HCT116 (cell line): ENCODE measurements at regions of chr6 and their contacts with region 1.

Region 1: DNA sequence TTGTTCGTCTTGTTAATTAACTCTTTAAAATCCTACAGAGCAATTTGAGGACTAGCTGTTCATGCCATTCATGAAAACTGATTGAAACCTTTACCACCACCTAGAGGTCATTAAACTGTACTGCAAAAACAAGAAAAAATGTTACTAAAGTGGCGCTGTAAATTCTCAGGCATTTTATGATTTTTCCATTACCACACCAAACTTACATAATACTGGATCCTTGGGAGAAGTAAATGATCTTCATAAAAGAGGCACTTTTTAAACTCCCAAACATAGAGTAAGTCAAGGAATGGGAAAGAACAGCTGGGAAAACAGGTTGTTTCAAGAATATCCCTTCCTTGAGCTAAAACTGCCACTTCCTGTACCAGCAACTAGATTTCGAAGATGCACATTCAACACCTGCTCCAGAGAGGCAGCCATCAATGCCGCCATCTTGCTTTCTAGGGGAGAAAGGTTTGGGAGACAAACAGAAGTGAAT is 54.3 kb downstream of the MYLIP start:
- DNase-seq: peak; percentile 52
- ATAC-seq: peak; percentile 63
- H3K4me3 ChIP-seq: no peak overlapping the region
- H3K27ac ChIP-seq: no peak overlapping the region
- H3K4me1 ChIP-seq: peaks cover 0 to 5% of the 10 kb centered on the region in 2 experiments; a peak in 1 of 4 replicates
- H3K27me3 ChIP-seq: no peaks in the 10 kb centered on the region
- CTCF ChIP-seq: peak; percentile 55 to 87 (median 70); a peak in 5 of 6 replicates
- POLR2A ChIP-seq: no peak
- RAD21 ChIP-seq: peak; percentile 77

Region 2: DNA sequence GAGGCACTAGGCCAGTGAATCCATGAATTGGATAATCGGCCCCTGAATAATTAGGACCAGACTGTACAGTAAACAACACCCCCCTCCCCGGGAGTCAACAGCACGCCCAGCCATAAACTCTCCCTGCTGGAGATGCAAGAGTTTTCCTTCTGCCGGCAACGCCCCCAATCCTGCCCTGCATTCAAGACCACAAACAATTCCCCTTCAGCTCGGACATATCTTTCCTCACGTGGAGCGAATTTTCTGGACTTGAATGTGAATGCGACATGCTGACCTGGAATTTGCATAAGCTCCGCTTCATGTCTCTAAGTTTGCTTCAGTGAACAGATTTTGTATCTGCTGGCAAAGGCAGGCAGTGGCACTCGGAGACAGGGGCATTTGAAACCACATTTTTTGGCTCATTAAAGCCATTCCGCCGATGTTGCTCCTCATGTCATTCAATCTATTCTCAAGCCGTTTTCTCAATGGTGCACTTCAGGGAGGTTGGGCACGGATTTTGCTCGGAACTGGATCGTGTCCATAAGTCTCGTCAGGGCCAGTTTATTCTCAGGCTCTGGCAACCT is 17.2 kb after region 1 on chr6:
- CTCF ChIA-PET with region 1: interaction called, 12 read pairs
- POLR2A ChIA-PET with region 1: interaction called, 4 read pairs
- RAD21 ChIA-PET with region 1: no interaction called
- intact Hi-C with region 1: no loop called
- DNase-seq: no peak
- ATAC-seq: no peak
- H3K4me3 ChIP-seq: no peak overlapping the region
- H3K27ac ChIP-seq: no peak overlapping the region
- H3K4me1 ChIP-seq: no peaks in the 10 kb centered on the region
- H3K27me3 ChIP-seq: no peaks in the 10 kb centered on the region
- CTCF ChIP-seq: no peak
- POLR2A ChIP-seq: no peak
- RAD21 ChIP-seq: no peak

Region 3: DNA sequence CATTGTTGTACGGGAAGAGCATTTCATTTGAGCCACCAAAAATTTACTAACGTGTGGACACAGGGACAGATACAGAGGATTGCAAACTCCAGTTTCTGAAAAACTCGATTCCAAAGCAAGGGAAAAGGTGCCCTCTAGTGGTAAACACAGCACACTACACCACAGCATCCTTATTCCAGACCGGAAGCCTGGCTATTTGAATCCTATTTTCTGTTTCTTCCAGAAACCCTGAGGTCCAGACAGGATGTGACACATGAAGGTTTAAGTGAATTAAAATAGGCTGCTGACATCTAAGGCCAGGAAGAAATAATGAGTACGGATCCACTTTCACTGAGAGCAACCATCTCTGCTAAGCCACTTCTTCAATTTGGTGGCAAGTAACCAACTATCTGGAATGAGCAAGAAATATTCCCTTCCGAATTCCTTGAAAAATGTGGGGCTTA is 23.4 kb after region 1 on chr6:
- CTCF ChIA-PET with region 1: interaction called, 12 read pairs
- POLR2A ChIA-PET with region 1: no interaction called
- RAD21 ChIA-PET with region 1: no interaction called
- intact Hi-C with region 1: no loop called
- DNase-seq: peak; percentile 37
- ATAC-seq: peak; percentile 91
- H3K4me3 ChIP-seq: no peak overlapping the region
- H3K27ac ChIP-seq: no peak overlapping the region
- H3K4me1 ChIP-seq: peaks cover 0 to 3% of the 10 kb centered on the region in 2 experiments; a peak in 1 of 4 replicates
- H3K27me3 ChIP-seq: peaks cover 6% of the 10 kb centered on the region; the same call in 1 of the 2 replicates
- CTCF ChIP-seq: peak; percentile 88 to 97 (median 91)
- POLR2A ChIP-seq: no peak
- RAD21 ChIP-seq: peak; percentile 93

Region 4: GRCh38 chr6:17226786-17227233 is 1043.6 kb after region 1 on chr6:
- CTCF ChIA-PET with region 1: no interaction called
- POLR2A ChIA-PET with region 1: no interaction called
- RAD21 ChIA-PET with region 1: no interaction called
- intact Hi-C with region 1: no loop called
- DNase-seq: no peak
- ATAC-seq: no peak
- H3K4me3 ChIP-seq: no peak overlapping the region
- H3K27ac ChIP-seq: no peak overlapping the region
- H3K4me1 ChIP-seq: no peaks in the 10 kb centered on the region
- H3K27me3 ChIP-seq: no peaks in the 10 kb centered on the region
- CTCF ChIP-seq: no peak
- POLR2A ChIP-seq: no peak
- RAD21 ChIP-seq: no peak